ENCODE measurements at regions of chr19 and their contacts with region 1.

Region 1: GRCh38 chr19:10106100-10106936 is at the start of gene PPAN:
- DNase-seq: peak; percentile 99
- H3K4me3 Mint-ChIP-seq: peak within 1 kb of the TSS; percentile 80
- H3K27ac Mint-ChIP-seq: peak within 1 kb of the TSS; percentile 100
- H3K4me1 Mint-ChIP-seq: peaks cover 69% of the 10 kb centered on the region
- H3K27me3 Mint-ChIP-seq: no peaks in the 10 kb centered on the region
- total RNA-seq, gene PPAN: 59.7 to 60.0 TPM

Region 2: GRCh38 chr19:9834726-9835506 is 271.4 kb before region 1 on chr19 and contains the start of gene PIN1:
- CTCF ChIA-PET with region 1: no interaction called
- intact Hi-C with region 1: loop called (anchors 5 kb)
- DNase-seq: peak; percentile 99
- H3K4me3 Mint-ChIP-seq: peak within 1 kb of the TSS; percentile 84
- H3K27ac Mint-ChIP-seq: peak within 1 kb of the TSS; percentile 85
- H3K4me1 Mint-ChIP-seq: peaks cover 27% of the 10 kb centered on the region
- H3K27me3 Mint-ChIP-seq: no peaks in the 10 kb centered on the region
- total RNA-seq, gene PIN1: 84.5 to 88.1 TPM

Region 3: DNA sequence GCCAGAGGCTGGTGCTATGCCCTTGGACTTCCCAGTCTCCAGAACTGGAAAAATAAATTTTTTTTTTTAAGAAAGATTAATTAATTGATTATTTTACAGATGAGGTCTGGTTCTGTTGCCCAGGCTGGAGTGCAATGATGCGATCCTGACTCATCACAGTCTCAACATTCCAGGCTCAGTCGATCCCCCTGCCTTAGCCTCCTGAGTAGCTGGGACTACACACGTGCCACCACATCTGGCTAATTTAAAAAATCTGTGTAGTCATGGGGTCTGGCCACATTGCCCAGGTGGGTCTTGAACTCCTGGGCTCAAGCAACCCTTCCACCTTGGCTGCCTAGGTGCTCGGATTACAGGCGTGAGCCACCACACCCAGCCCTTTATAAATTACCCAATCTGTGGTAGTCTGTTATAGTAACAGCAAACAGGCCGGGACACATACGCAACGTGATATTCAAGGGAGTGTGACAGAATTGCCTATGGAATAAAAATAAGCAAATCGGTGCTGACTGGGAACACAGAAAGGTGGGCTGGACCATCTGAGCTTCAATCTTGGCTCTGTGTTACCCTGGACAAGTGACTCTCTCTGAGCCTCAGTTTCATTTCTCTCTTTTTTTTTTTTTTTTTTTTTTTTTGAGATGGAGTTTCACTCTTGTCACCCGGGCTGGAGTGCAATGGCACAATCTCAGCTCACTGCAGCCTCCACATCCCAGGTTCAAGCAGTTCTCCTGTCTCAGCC is 228.4 kb before region 1 on chr19:
- CTCF ChIA-PET with region 1: no interaction called
- intact Hi-C with region 1: no loop called
- DNase-seq: no peak
- H3K4me3 Mint-ChIP-seq: no peak overlapping the region
- H3K27ac Mint-ChIP-seq: no peak overlapping the region
- H3K4me1 Mint-ChIP-seq: no peaks in the 10 kb centered on the region
- H3K27me3 Mint-ChIP-seq: no peaks in the 10 kb centered on the region

Region 4: DNA sequence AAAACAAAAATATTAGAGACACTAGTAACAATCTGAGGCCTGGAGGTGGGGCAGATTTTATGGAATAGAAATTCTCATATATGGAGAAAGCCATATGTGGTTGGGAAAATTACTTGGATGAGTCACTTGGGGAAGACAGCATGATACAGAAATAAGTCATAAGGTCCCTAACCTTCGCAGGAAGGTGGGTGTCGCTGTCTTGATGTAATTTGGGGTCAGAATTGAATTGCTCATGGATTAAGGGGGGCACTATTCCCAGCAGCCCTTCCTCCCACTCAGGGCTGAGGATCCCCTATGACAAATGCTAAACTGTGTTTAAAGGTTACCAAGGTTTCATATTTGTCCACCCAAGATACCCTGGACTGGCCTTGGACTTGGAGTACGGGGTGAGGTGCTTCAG is 88.1 kb before region 1 on chr19:
- CTCF ChIA-PET with region 1: no interaction called
- intact Hi-C with region 1: no loop called
- DNase-seq: no peak
- H3K4me3 Mint-ChIP-seq: no peak overlapping the region
- H3K27ac Mint-ChIP-seq: no peak overlapping the region
- H3K4me1 Mint-ChIP-seq: no peaks in the 10 kb centered on the region
- H3K27me3 Mint-ChIP-seq: peaks cover 11% of the 10 kb centered on the region

Region 5: GRCh38 chr19:10095948-10096621 is 10.2 kb before region 1 on chr19:
- CTCF ChIA-PET with region 1: interaction called, 7 read pairs
- intact Hi-C with region 1: loop called (anchors 1 kb)
- DNase-seq: peak; percentile 80
- H3K4me3 Mint-ChIP-seq: peak overlapping the region; percentile 58
- H3K27ac Mint-ChIP-seq: no peak overlapping the region
- H3K4me1 Mint-ChIP-seq: peaks cover 23% of the 10 kb centered on the region
- H3K27me3 Mint-ChIP-seq: no peaks in the 10 kb centered on the region

Region 6: DNA sequence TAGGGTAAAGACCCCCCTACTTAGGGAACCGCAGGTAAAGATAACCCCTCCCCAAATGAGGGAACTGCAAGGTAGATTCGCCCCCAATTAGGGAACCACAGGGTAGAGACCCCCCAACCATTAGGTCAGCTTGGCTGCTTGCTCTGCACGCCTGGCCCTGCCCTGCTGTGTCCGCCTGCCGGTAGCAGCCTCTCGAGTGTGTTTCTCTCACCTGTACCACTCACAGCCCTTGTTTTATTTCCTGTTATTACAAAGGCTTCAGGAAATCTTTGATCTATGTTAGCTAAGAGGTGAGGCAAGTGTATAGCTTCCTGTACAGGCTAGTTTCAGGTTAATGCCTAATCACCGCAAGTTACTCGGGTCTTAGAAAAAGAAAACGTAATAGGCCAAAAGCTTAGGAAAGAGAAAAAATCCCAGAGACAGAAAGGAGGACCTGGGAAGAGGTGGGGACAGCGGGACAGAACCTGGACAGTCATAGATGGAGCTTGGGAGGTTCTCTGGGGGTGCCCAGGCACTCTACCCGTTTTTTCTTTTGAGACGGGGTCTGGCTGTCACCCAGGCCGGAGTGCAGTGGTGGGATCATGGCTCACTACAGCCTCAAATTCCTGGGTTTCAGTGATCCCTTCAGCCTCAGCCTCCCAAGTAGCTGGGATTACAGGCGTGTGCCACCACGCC is 36.5 kb after region 1 on chr19:
- CTCF ChIA-PET with region 1: interaction called, 3 read pairs
- intact Hi-C with region 1: loop called (anchors 2 kb)
- DNase-seq: peak; percentile 61
- H3K4me3 Mint-ChIP-seq: no peak overlapping the region
- H3K27ac Mint-ChIP-seq: peak overlapping the region; percentile 93
- H3K4me1 Mint-ChIP-seq: peaks cover 34% of the 10 kb centered on the region
- H3K27me3 Mint-ChIP-seq: no peaks in the 10 kb centered on the region

Region 7: GRCh38 chr19:10230861-10231611 is 124.7 kb after region 1 on chr19 and contains the start of gene S1PR2:
- CTCF ChIA-PET with region 1: interaction called, 4 read pairs
- intact Hi-C with region 1: loop called (anchors 1 kb)
- DNase-seq: peak; percentile 66
- H3K4me3 Mint-ChIP-seq: peak within 1 kb of the TSS; percentile 84
- H3K27ac Mint-ChIP-seq: peak within 1 kb of the TSS; percentile 72
- H3K4me1 Mint-ChIP-seq: peaks cover 24% of the 10 kb centered on the region
- H3K27me3 Mint-ChIP-seq: no peaks in the 10 kb centered on the region
- total RNA-seq, gene S1PR2: 3.4 TPM

Region 8: DNA sequence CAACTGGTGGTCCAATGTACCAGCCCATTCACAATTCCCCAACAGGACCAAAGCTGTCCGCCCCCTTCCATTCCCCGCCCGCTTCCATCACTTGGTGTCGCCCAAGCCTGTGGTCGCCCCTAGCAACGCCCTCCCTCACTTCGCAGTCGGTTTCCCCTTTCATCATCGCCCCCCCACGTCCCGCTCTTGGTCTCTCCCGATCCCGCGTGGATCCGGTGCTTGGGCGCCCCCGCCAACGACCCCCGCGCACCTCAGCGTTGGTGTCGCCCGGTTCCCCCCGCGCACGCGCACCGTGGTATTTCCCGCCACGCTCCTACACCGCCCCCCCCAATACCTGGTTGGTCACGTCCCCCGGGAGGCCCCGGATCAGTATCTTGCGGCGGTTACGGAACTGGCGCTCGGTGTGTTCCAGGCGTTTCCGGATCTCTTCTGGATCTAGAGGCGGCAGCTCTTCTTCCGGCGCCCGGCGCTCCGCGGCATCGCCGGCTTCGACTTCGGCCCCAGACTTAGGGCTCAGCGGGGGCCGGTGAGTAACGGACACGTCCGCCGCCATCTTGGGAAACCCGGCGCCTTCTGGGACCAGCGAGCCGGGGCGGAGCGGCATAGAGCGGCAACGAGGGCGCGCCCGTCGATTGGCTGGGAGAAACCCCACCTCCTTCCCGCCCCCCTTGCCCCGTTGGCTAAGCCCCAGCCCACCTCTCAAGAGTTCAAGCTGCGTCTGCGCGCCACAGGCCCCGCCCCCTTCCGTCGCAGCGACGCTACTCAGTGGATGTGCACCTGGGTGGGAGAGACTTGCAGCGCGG is 226.8 kb after region 1 on chr19 and contains the start of gene RAVER1:
- CTCF ChIA-PET with region 1: no interaction called
- intact Hi-C with region 1: loop called (anchors 10 kb)
- DNase-seq: peak; percentile 99
- H3K4me3 Mint-ChIP-seq: peak within 1 kb of the TSS; percentile 94
- H3K27ac Mint-ChIP-seq: peak within 1 kb of the TSS; percentile 96
- H3K4me1 Mint-ChIP-seq: peaks cover 36% of the 10 kb centered on the region
- H3K27me3 Mint-ChIP-seq: no peaks in the 10 kb centered on the region
- total RNA-seq, gene RAVER1: 63.0 to 69.0 TPM